A549 (cell line): ENCODE measurements at regions of chr22 and their contacts with region 1.

Region 1: DNA sequence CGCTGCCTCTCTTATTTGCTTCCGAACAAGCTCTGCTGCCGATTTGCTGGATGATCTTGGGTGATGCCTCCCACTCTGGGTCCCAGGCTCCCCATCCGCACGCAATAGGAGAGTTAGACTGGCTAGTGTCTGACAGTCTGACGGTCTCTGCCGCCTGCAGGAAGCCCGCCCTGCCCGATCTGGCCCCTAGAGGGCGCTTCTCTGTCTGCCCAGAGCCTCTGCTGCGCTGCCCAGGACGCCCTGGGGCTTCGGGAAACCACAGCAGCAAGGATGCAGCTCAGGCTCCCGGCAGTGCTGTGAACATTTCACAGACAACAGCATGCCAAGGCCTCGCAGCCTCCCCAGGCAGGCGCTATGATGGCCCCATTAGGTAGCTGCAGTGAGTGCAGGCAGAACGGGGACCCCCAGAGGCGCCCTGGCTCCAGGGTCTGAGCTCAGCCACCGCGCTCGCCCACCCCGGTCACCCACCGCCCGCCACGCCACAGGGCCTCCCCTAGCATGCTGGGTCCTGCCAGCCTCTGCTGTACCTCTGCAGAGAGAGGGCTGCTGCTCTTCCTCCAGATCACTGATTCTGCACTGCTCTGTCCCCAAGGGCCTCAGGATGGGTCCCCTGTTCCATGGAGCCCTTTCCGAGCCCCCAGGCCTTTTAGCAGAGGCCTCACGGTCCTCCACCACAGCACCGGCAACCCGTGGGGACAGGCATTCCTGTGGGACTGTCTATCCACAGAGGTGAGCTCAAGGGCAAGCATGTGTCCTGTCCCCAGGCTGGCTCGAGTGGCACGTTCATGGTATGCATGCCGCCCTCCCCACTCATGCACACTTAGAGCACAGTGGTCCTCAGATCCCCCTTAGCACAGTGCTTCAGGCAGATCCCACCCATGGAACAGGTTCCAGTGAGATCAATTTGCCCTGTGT is 4.3 kb upstream of the BAIAP2L2 start:
- DNase-seq: peak; percentile 67 to 82
- ATAC-seq: peak; percentile 59 to 84
- H3K4me3 ChIP-seq: no peak overlapping the region
- H3K27ac ChIP-seq: no peak overlapping the region
- H3K4me1 ChIP-seq: peaks cover 27% of the 10 kb centered on the region
- CTCF ChIP-seq: peak; percentile 72
- EP300 ChIP-seq: no peak
- POLR2A ChIP-seq: no peak
- RAD21 ChIP-seq: peak; percentile 63 to 66

Region 2: GRCh38 chr22:38097557-38098409 is 17.0 kb before region 1 on chr22:
- CTCF ChIA-PET with region 1: interaction called, 24 read pairs
- POLR2A ChIA-PET with region 1: no interaction called
- DNase-seq: no peak
- ATAC-seq: peak in 1 of 2 experiments; percentile 75; a peak in 3 of 6 replicates
- H3K4me3 ChIP-seq: no peak overlapping the region
- H3K27ac ChIP-seq: no peak overlapping the region
- H3K4me1 ChIP-seq: 0 out of 3 replicates have a peak, but pooled peaks cover 8% of the 10 kb centered on the region
- CTCF ChIP-seq: no peak
- EP300 ChIP-seq: no peak
- POLR2A ChIP-seq: no peak
- RAD21 ChIP-seq: no peak; a peak in 1 of 5 replicates

Region 3: DNA sequence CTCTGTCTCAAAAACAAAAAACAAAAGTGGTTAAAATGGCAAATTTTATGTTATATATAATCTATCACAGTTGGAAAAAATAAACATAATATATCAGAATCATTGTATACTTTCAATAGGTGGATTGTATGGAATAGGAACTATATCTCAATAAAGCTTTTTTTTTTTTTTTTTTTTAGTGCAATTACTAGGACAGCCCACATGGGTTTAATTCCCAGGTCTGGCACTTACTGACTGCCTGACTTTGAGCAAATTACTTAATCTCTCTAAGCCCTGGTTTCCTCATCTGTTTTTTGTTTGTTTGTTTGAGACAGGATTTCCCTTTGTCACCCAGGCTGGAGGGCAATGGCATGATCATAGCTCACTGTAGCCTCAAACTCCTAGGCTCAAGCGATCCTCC is 21.8 kb after region 1 on chr22:
- CTCF ChIA-PET with region 1: interaction called, 22 read pairs
- POLR2A ChIA-PET with region 1: no interaction called
- DNase-seq: no peak
- ATAC-seq: no peak
- H3K4me3 ChIP-seq: no peak overlapping the region
- H3K27ac ChIP-seq: no peak overlapping the region
- H3K4me1 ChIP-seq: peaks cover 10% of the 10 kb centered on the region; the same call in 2 of the 3 replicates
- CTCF ChIP-seq: no peak
- EP300 ChIP-seq: no peak
- POLR2A ChIP-seq: no peak
- RAD21 ChIP-seq: no peak

Region 4: DNA sequence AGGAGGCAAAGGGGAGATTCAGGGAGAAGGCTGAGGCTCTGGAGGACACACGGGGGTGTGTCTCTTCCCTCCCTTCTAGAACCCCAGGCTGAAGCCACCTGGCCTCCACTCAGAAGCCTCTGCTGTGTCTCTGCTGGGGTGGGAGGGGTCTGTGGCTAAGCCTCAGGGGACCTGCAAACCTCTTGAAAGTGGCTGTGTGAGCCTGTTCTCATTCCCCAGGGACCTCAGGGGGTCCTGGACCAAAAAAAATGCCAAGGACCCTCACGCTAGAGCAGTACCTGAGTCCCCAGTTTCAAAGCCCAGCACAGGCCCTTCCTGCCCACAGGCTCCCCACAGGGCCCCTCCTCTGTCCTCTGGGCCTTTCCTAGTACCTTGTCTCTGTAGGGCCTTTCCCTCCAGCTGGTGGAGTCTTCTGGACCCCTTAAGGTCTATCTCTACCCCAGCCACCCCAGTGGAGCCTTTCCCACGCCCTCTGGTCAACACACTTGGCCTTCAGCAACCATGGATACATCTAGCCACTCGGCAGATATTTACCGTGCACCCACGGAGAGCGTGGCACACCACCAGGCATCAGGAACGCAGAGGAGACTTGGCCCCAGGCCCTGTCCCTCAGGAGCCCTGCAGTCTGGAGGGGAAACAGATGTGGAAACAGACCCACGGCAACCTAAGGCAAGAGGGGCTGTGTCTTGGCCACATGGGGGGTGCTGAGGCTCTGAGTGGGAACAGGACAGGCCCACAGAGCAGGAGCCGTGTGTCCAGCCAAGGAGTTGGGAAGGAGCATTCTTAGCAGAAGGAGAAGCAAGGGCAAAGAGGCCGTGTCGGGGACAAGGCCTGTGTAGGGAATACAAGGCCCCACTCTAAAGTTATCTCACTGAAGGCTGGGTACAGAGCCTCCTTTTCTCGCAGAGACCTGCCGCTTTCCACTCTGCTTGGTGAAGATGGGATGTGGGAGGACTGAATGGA is 48.4 kb after region 1 on chr22:
- CTCF ChIA-PET with region 1: interaction called, 10 read pairs
- POLR2A ChIA-PET with region 1: interaction called, 3 read pairs
- DNase-seq: no peak
- ATAC-seq: no peak
- H3K4me3 ChIP-seq: no peak overlapping the region
- H3K27ac ChIP-seq: peak overlapping the region; percentile 67 to 70; a peak in 5 of 6 replicates
- H3K4me1 ChIP-seq: peaks cover 39% of the 10 kb centered on the region
- CTCF ChIP-seq: no peak
- EP300 ChIP-seq: no peak
- POLR2A ChIP-seq: no peak
- RAD21 ChIP-seq: no peak

Region 5: DNA sequence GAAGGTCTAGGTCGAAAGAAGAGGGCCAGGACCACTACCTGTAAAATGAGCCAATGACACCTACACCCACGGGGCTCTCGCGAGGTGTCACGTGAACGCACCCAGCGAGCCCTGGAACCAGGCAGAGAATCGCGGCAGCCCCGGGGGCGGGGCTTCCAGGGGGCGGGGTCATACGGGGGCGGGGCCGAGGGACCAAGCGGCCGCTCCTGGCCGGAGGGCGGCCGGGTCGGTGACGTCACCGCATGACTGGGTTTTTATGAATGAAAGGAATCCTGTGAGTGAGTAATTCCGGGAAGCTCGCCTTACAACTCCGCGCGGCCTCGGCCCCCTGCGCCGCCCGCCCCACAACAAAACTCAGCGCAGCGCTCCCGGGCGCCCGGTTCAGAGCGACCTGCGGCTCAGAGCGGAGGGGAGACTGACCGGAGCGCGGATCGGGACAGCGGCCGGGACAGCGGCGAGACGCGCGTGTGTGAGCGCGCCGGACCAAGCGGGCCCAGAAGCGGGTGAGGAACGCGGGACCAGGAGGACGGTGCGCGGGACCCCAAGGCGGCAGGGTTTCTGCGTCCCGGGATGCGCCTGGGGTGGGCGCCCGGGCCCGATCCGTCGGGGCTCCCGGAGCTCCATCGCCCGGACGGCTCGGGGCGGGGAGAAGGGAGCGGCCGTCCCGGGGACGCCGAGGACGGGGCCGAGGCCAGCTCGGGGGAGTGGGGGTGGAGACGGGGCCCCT is 87.1 kb after region 1 on chr22 and contains the start of gene MAFF:
- CTCF ChIA-PET with region 1: interaction called, 12 read pairs
- POLR2A ChIA-PET with region 1: interaction called, 3 read pairs
- DNase-seq: peak; percentile 64 to 94
- ATAC-seq: peak; percentile 81 to 84
- H3K4me3 ChIP-seq: peak within 1 kb of the TSS; percentile 67
- H3K27ac ChIP-seq: peak within 1 kb of the TSS; percentile 85 to 96
- H3K4me1 ChIP-seq: peaks cover 12% of the 10 kb centered on the region; the same call in 1 of the 3 replicates
- CTCF ChIP-seq: no peak
- EP300 ChIP-seq: no peak
- POLR2A ChIP-seq: no peak
- RAD21 ChIP-seq: no peak
- polyA plus RNA-seq, gene MAFF: 3.5 and 4.0 TPM in 2 replicates